Heart left ventricle (tissue), 16 donors: ENCODE measurements at regions of chr9 and their contacts with region 1.

Region 1: DNA sequence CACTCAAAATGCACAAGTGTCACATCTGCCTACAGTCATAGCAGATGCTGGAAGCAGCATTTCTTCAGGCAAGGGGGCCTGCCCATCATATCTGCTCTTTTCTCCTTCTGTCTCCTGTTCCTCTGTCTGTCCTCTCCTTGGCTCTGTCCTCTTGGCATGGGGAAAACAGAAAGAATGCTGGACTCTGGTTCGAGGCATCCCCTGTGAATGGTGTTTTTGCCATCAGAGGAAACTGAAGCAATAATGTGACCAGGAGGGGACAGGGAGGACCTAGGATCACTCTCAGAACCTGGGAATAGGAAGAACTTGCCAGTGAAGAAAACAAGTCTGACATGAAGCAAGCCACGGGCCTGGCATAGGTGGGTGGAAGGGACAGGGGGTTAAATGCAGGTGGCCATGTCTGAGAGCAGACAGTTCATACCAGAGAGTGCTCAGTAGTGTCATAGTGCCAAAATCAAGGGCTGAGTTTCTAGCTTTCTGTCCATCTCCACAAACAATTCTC is 35.3 kb downstream of the AQP7 start:
- DNase-seq: no peak
- ATAC-seq: no peak
- H3K4me3 ChIP-seq: no peak overlapping the region
- H3K27ac ChIP-seq: no peak overlapping the region
- H3K4me1 ChIP-seq: no peaks in the 10 kb centered on the region
- H3K27me3 ChIP-seq: no peaks in the 10 kb centered on the region
- CTCF ChIP-seq: no peak
- POLR2A ChIP-seq: no peak

Region 2: GRCh38 chr9:32776201-32776600 is 590.8 kb before region 1 on chr9:
- intact Hi-C with region 1: no loop called
- DNase-seq: no peak
- ATAC-seq: no peak
- H3K4me3 ChIP-seq: no peak overlapping the region
- H3K27ac ChIP-seq: no peak overlapping the region
- H3K4me1 ChIP-seq: no peaks in the 10 kb centered on the region
- H3K27me3 ChIP-seq: peaks cover 0 to 19% (median 4%) of the 10 kb centered on the region in 9 donors
- CTCF ChIP-seq: no peak
- POLR2A ChIP-seq: no peak

Region 3: DNA sequence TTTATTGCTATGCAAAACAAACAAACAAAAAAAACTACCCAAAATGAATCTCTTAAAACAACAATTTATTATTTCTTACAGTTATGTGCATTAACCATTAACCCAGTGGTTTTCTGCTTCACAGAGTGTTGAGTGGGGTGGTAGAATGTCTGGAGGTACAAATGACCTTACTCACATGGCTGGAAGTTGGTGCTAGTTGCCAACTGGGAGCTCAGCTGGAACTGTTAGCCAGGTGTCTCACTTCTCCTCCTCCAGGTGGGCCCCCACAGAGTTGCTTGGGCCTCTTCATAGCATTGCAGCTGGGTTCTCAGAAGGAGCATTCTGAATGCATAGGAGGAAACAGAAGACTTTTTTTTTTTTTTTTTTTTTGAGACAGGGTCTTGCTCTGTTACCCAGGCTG is 189.4 kb before region 1 on chr9:
- intact Hi-C with region 1: no loop called
- DNase-seq: no peak
- ATAC-seq: no peak
- H3K4me3 ChIP-seq: no peak overlapping the region
- H3K27ac ChIP-seq: no peak overlapping the region
- H3K4me1 ChIP-seq: peaks cover 0 to 17% (median 4%) of the 10 kb centered on the region in 12 donors
- H3K27me3 ChIP-seq: no peaks in the 10 kb centered on the region
- CTCF ChIP-seq: no peak
- POLR2A ChIP-seq: no peak

Region 4: DNA sequence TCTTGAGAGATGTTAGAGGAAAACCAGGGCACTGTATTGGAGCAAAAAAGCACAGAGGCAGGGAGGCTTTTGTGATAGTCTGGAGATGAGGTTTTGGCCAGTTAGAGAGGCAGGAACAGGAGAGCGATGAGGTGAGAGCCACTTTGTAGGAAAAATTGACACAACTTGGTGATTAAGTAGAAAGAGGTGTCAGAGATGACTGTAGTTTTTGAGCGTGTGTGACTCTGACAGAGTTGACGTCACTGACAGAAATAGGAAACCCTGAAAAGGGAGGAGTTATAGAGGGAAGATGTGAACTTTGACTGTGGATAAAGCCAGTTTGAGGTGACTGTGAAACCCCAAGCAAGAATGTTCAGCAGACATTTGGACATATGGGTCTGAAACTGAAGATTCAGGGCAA is 61.0 kb before region 1 on chr9:
- intact Hi-C with region 1: no loop called
- DNase-seq: no peak
- ATAC-seq: peak; percentile 53 to 84 (median 68)
- H3K4me3 ChIP-seq: no peak overlapping the region
- H3K27ac ChIP-seq: peak overlapping the region in 1 of 12 donors; percentile 64
- H3K4me1 ChIP-seq: peaks cover 0 to 10% (median 0%) of the 10 kb centered on the region in 12 donors
- H3K27me3 ChIP-seq: no peaks in the 10 kb centered on the region
- CTCF ChIP-seq: no peak
- POLR2A ChIP-seq: no peak

Region 5: DNA sequence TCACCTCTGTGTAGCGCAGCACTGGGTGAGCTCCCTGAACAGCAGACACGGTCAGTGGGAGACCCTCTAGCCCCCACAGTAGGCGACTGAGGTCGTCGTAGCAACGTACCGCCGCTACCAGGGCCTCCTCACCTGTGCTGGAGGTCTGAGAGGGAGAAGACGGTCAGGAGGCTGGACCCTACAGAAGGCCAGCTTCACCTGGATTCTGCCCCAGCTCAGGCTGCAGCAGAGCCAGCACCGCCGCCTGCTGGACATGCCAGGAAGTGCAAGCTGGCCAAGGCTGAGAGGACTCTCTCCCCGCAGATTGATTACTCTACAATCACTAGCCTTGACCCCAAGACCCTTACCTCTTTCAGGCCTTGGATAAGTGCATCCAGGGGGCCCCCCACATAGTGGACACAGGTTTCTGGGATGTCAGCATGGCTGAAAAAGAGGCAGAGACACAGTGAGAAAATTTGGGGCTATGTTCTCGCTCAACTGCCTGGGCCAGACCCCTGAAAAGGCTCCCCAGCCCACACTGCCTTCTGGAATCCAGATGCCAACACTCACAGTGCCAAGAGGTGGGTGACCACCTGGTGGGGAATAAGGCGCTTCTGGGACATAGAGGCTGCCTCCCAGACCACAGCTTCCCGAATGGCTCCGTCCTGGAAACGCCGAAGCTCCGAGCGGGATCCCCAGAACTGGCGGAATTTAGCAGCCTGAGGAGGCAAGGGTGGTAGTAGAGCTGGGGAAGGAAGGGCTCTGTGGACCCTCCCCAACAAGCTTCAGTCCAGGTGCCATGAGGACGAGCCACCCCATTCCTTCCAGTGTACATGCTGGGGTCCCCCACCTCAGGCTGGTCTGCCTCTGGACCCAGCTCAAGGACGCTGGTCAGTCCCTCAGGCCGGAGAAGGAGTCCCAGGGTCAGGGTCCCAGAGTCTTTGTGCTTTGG is 99.8 kb after region 1 on chr9:
- intact Hi-C with region 1: loop called in 6 of 10 experiments (anchors 5 kb)
- DNase-seq: peak; percentile 50 to 84 (median 57)
- ATAC-seq: peak; percentile 28 to 68 (median 46)
- H3K4me3 ChIP-seq: no peak overlapping the region
- H3K27ac ChIP-seq: no peak overlapping the region
- H3K4me1 ChIP-seq: peaks cover 0 to 6% (median 0%) of the 10 kb centered on the region in 12 donors
- H3K27me3 ChIP-seq: no peaks in the 10 kb centered on the region
- CTCF ChIP-seq: peak; percentile 84 to 95 (median 89)
- POLR2A ChIP-seq: no peak